ENCODE measurements at regions of chr18 and their contacts with region 1.

Region 1: DNA sequence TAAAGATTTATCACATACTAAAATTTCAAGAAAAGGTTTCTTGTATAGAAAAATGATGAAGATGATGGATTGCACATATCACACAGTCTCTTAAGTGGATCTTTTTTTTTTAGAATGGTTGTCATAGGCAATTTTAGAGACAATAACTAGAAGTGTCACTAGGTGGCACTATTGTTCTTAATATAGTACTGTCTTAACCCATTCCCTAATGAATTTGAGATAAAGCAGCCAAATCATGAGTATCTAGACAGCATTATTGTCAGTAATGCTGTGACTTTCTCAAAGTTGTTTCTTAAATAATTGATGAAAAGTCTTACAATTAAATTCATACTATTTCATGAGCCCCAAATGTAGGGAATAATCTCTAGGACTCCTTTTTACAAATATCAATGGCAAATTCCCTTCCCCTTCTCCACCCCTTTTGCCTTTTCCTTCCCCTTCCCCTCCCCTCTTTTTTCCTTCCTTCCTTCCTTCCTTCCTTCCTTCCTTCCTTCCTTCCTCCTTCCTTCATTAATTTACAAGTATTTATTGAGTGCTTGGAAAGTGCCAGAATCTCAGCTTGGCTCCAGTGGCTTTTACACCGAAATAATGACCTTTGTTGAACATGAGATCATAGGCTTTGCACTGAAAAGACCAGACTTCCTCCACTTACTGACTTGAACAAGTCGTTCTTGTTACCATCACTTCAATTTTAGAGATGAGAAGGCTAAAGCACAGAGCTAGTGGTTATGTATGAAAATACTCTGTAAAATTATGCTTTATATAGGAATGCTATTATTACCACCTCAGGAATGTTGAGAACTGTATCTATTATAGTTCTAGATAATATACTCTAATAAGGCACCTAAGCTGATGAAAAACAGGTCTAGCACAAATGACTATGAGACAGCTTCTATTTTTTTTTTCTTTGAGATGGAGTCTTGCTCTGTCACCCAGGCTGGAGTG is 19.8 kb downstream of the MYL12B start:
- DNase-seq: no peak
- ATAC-seq: peak; percentile 73 to 85 (median 82)
- H3K4me3 ChIP-seq: no peak overlapping the region
- H3K27ac ChIP-seq: peak overlapping the region in 6 of 12 donors; percentile 9 to 56 (median 51)
- H3K4me1 ChIP-seq: peaks cover 0 to 22% (median 9%) of the 10 kb centered on the region in 12 donors
- H3K27me3 ChIP-seq: no peaks in the 10 kb centered on the region
- CTCF ChIP-seq: peak; percentile 55 to 83 (median 75)
- POLR2A ChIP-seq: no peak

Region 2: DNA sequence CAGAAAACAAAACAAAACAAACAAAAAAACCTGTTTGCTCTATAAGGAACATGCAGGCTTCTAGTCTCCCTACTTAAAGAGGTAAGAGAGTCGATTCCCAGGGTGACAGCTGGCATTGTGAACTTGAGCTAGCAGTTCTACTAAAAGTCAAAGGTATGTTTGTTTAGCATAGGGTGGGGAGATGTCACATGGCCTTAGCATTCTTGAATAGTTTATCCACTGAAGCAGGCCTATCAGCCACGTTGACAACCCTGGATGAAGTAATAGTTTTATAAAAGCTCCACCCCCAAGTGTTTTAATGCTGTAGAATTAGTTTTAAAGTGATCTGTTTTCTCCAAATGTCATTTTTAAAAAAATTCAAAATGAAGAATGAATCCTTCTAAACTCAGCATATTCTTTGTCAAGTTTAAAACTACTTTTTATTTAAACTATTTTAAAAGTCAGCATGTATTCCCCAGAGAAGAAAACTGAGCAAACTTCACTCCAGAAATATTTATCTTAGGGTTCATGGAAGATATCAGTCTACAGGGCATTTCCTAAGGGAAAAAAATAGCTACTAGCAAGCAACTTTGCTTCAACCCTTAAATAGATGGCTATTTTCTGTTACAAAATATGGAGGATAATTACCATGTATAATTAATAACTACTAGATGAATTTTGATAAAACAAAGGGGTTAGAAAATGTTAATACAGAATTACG is 63.6 kb before region 1 on chr18:
- intact Hi-C with region 1: no loop called
- DNase-seq: peak in 1 of 5 donors; percentile 37
- ATAC-seq: peak; percentile 41 to 55 (median 53)
- H3K4me3 ChIP-seq: peak overlapping the region; percentile 4 to 70 (median 60)
- H3K27ac ChIP-seq: peak overlapping the region; percentile 77 to 97 (median 90)
- H3K4me1 ChIP-seq: peaks cover 0 to 34% (median 9%) of the 10 kb centered on the region in 12 donors
- H3K27me3 ChIP-seq: no peaks in the 10 kb centered on the region
- CTCF ChIP-seq: no peak
- POLR2A ChIP-seq: peak; percentile 12 to 54

Region 3: DNA sequence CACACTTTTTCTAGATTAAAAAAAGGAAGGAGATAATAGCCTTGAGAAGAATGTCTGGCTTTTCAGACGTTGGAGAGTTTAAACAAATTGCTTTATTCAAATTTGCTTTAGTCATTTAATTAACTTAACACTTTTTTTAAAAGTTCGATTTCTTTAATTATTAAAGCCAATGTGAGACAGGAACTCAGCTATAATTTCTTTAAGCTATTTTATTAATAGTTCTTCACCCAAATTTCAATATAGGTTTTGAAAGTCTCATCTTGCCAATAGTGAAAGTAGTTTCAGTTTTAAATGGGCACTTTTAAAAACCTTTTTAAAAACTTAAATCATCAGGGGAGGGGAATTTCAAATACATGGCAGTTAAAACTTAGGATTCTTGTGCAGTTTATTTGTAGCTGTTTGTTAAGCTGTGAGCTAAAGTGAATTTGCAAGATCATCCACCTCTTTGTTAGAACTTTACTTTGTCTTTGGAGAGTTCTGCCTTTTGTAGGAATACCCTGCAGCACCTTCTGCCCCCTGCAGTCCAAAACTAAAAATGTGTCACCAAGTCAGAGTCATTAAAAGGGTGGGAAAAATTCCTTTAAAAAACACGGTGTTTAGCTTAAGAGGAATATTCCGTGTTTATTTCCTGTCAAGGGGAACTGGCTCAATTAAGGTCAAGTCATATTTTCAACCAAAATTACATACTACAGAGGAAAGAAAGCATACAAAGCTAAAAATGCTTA is 172.8 kb after region 1 on chr18:
- intact Hi-C with region 1: loop called in 9 of 10 experiments (anchors 2 to 5 kb)
- DNase-seq: peak in 2 of 5 donors; percentile 35 to 48
- ATAC-seq: no peak
- H3K4me3 ChIP-seq: peak overlapping the region in 11 of 12 donors; percentile 8 to 93 (median 77)
- H3K27ac ChIP-seq: peak overlapping the region; percentile 36 to 100 (median 97)
- H3K4me1 ChIP-seq: peaks cover 0 to 53% (median 20%) of the 10 kb centered on the region in 12 donors
- H3K27me3 ChIP-seq: no peaks in the 10 kb centered on the region
- CTCF ChIP-seq: peak; percentile 49 to 84 (median 73)
- POLR2A ChIP-seq: no peak

Region 4: GRCh38 chr18:3579701-3580100 is 298.0 kb after region 1 on chr18:
- intact Hi-C with region 1: loop called in 1 of 10 experiments (anchors 5 kb)
- DNase-seq: no peak
- ATAC-seq: no peak
- H3K4me3 ChIP-seq: no peak overlapping the region
- H3K27ac ChIP-seq: no peak overlapping the region
- H3K4me1 ChIP-seq: no peaks in the 10 kb centered on the region
- H3K27me3 ChIP-seq: no peaks in the 10 kb centered on the region
- CTCF ChIP-seq: no peak
- POLR2A ChIP-seq: no peak

Region 5: GRCh38 chr18:3593904-3594661 is 312.4 kb after region 1 on chr18:
- intact Hi-C with region 1: loop called (anchors 1 to 5 kb)
- DNase-seq: peak; percentile 86 to 95 (median 91)
- ATAC-seq: peak; percentile 81 to 88 (median 86)
- H3K4me3 ChIP-seq: peak overlapping the region; percentile 29 to 68 (median 54)
- H3K27ac ChIP-seq: peak overlapping the region; percentile 90 to 97 (median 96)
- H3K4me1 ChIP-seq: peaks cover 5 to 55% (median 41%) of the 10 kb centered on the region in 12 donors
- H3K27me3 ChIP-seq: no peaks in the 10 kb centered on the region
- CTCF ChIP-seq: peak; percentile 77 to 97 (median 85)
- POLR2A ChIP-seq: peak in 1 of 2 donors; percentile 33

Region 6: DNA sequence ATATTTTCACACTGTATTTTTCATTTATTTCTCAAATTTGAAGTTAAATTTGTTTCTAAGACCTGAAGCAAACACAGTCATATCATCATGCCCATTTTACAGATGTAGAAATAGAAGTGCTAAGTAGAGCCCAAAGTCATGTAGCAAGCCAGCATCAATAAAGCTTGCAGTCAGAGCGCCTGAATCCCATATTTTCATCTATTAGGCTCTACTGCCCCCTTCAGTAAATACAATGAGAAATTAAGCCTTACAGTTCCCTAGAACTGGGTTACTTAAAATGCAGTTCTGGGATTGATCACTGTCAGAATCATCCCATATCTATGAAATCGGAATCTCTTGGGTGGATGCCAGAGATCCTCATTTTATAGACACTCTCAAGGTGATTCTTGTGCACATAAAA is 588.1 kb after region 1 on chr18:
- intact Hi-C with region 1: loop called in 3 of 10 experiments (anchors 5 to 10 kb)
- DNase-seq: no peak
- ATAC-seq: peak in 3 of 4 donors; percentile 67 to 76 (median 70)
- H3K4me3 ChIP-seq: no peak overlapping the region
- H3K27ac ChIP-seq: no peak overlapping the region
- H3K4me1 ChIP-seq: peaks cover 0 to 17% (median 3%) of the 10 kb centered on the region in 12 donors
- H3K27me3 ChIP-seq: no peaks in the 10 kb centered on the region
- CTCF ChIP-seq: peak in 10 of 12 donors; percentile 15 to 60 (median 48)
- POLR2A ChIP-seq: no peak

Region 7: DNA sequence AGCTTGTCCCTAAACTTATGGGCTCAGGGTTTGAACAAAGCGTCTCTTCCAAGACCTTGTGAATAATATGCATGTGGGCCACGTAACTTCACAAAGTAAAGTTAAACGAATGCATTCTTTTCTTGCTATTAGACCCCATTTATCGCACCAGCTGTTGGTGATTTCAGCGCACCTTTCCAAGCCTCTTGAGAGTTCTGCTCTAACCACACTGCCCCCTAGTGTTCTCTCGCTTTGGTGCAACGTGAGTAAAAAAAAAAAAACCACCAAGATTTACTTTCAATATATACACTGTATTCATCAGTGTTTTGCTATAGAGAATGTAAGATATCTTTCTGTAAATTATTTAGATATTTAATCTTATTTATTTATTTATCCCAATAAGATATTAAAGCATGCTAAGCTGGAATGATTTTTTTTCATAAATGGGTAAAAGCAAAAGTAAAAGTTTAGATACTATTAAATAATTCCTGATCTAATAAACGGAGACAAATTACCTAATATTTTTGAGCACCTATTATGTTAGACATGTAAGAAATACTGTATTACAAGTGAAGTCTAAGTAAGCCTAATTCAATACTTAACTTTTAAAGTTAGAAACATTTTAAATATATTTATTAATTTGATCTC is 713.9 kb after region 1 on chr18:
- intact Hi-C with region 1: loop called in 3 of 10 experiments (anchors 5 to 10 kb)
- DNase-seq: peak in 4 of 5 donors; percentile 30 to 46 (median 38)
- ATAC-seq: peak in 3 of 4 donors; percentile 44 to 72 (median 64)
- H3K4me3 ChIP-seq: peak overlapping the region in 2 of 12 donors; percentile 8 to 11
- H3K27ac ChIP-seq: peak overlapping the region in 1 of 12 donors; percentile 84
- H3K4me1 ChIP-seq: peaks cover 0 to 18% (median 0%) of the 10 kb centered on the region in 12 donors
- H3K27me3 ChIP-seq: no peaks in the 10 kb centered on the region
- CTCF ChIP-seq: peak; percentile 80 to 93 (median 88)
- POLR2A ChIP-seq: no peak

Measured in heart left ventricle (tissue), 16 donors.